Spleen (tissue), 13 donors: ENCODE measurements at regions of chr2 and their contacts with region 1.

Region 1: DNA sequence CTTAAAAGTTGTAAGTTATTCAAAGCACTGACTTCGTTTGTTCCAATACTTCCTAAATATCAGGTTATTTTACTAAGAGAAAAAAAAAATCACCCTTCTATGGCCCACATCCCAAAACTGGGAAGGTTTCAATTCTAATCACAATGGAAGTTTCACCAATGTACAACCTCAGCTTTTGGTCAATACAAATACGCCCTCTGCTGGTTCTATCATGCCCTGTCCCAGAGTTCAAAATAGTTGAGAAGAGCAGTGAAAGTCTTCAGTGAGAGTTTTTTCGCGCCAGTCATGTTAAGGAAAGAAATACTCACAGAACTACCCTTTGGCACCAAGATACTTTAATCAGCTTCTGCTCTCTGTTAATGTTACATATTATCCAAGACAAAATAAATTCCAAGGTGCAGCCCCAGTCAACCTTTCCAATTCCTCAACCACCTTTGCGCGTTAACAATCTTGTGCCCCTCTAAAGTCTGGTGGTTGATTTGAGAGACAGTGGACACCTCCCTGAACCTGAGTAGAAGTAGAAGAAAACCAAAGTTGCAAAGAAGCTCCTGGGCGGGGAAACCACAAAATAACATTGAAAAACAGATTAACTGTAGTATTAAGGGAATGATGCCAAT is 59.9 kb downstream of the SUMO1 start:
- DNase-seq: no peak
- H3K4me3 ChIP-seq: no peak overlapping the region
- H3K27ac ChIP-seq: no peak overlapping the region
- H3K4me1 ChIP-seq: no peaks in the 10 kb centered on the region
- H3K27me3 ChIP-seq: no peaks in the 10 kb centered on the region
- CTCF ChIP-seq: peak; percentile 55 to 84 (median 78)
- POLR2A ChIP-seq: no peak

Region 2: DNA sequence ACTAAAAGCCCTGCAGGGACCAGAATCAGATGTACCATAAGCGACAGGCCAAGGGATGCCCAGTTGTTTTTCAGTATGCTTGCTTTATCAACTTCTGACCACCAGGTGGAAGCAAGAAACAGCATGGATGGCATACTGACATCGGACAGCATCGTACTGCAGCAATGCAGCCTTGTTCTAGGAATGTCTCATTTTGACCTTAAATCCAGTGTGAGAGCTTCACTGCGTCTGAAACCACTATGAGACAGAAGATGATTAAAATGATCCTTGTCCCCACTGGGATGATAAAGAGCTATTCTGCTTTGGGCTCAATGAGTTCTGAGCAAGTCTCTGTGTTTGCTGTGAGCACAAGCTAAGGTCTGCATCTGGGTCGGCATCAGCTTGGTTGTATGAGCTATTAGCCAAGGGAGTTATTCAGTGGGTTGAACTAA is 317.8 kb before region 1 on chr2:
- intact Hi-C with region 1: loop called (anchors 2 kb)
- DNase-seq: no peak
- H3K4me3 ChIP-seq: no peak overlapping the region
- H3K27ac ChIP-seq: no peak overlapping the region
- H3K4me1 ChIP-seq: peaks cover 0 to 18% (median 6%) of the 10 kb centered on the region in 6 donors
- H3K27me3 ChIP-seq: peaks cover 0 to 59% (median 13%) of the 10 kb centered on the region in 7 donors
- CTCF ChIP-seq: peak; percentile 39 to 85 (median 74)
- POLR2A ChIP-seq: no peak

Region 3: DNA sequence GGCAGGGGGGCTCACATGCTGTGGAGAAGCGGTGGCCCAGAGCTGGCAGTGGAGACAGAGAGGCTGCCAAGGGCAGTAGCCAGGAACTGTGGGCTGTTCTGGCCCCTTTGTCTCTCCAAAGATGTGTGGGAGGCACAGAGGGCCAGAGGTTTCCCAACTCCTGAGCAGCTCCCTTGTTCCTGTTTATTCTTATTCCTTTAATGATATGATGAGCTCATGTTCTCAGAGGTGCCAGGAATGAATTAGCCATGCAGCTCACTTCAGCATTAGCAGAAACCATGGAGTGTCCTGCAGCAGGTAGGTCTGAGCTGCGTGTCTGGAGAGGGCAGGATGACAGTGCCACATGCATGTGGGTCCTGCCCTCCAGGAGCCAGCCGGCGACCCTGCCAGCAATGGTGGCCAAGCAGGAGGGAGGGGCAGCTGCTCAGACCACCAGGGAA is 222.7 kb before region 1 on chr2:
- intact Hi-C with region 1: no loop called
- DNase-seq: no peak
- H3K4me3 ChIP-seq: no peak overlapping the region
- H3K27ac ChIP-seq: no peak overlapping the region
- H3K4me1 ChIP-seq: no peaks in the 10 kb centered on the region
- H3K27me3 ChIP-seq: peaks cover 0 to 15% (median 0%) of the 10 kb centered on the region in 7 donors
- CTCF ChIP-seq: no peak
- POLR2A ChIP-seq: no peak